Right ventricle myocardium inferior (tissue), 1 donor: ENCODE measurements at regions of chr7 and their contacts with region 1.

Region 1: GRCh38 chr7:95045236-95045923 is 138.0 kb downstream of the PPP1R9A start:
- DNase-seq: no peak
- ATAC-seq: no peak

Region 2: GRCh38 chr7:94301024-94301586 is 744.3 kb before region 1 on chr7:
- intact Hi-C with region 1: no loop called
- DNase-seq: peak; percentile 80
- ATAC-seq: peak; percentile 86

Region 3: DNA sequence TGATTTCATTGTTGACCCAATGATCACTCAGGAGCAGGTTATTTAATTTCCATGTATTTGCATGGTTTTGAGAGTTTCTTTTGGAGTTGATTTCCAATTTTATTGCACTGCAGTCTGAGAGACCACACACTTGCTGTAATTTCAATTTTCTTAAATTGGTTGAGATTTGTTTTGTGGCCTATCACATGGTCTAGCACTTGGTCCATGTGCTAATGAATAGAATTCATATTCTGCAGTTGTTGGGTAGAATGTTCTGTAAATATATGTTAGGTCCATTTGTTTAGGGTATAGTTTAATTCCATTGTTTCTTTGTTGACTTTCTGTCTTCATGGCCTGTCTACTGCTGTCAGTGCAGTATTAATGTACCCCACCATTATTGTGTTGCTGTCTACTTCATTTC is 174.2 kb before region 1 on chr7:
- intact Hi-C with region 1: no loop called
- DNase-seq: no peak
- ATAC-seq: no peak

Region 4: GRCh38 chr7:94907026-94907810 is 138.2 kb before region 1 on chr7 and contains the start of gene PPP1R9A:
- intact Hi-C with region 1: loop called (anchors 5 kb)
- DNase-seq: peak; percentile 65
- ATAC-seq: peak; percentile 91
- total RNA-seq, gene PPP1R9A: 21.9 TPM